ENCODE measurements at regions of chr3 and their contacts with region 1.

Region 1: DNA sequence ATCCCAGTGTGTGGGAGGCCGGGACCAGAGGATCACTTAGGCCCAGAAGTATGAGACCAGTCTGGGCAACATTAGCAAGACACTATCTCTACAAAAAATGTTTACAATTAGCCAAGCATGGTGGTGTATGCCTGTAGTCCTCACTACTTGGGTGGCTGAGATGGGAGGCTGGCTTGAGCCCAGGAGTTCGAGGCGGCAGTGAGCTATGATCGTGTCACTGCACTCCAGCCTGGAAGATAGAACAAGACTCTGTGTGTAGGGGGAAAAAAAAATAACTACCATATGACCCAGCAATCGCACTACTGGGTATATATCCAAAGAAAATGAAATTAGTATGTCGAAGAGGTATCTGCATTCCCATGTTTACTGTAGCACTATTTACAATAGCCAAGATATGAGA is 22.6 kb downstream of the RYK start:
- DNase-seq: no peak
- ATAC-seq: no peak
- H3K4me3 Mint-ChIP-seq: no peak overlapping the region
- H3K27ac Mint-ChIP-seq: no peak overlapping the region
- H3K4me1 Mint-ChIP-seq: peaks cover 55% of the 10 kb centered on the region
- H3K27me3 Mint-ChIP-seq: no peaks in the 10 kb centered on the region
- CTCF ChIP-seq: no peak

Region 2: GRCh38 chr3:134242649-134243617 is 14.9 kb after region 1 on chr3:
- CTCF ChIA-PET with region 1: interaction called, 3 read pairs
- POLR2A ChIA-PET with region 1: no interaction called
- intact Hi-C with region 1: loop called (anchors 1 kb)
- DNase-seq: no peak
- ATAC-seq: no peak
- H3K4me3 Mint-ChIP-seq: no peak overlapping the region
- H3K27ac Mint-ChIP-seq: no peak overlapping the region
- H3K4me1 Mint-ChIP-seq: peaks cover 71% of the 10 kb centered on the region
- H3K27me3 Mint-ChIP-seq: no peaks in the 10 kb centered on the region
- CTCF ChIP-seq: no peak

Region 3: GRCh38 chr3:134250717-134251220 is 22.7 kb after region 1 on chr3 and contains the start of gene RYK:
- CTCF ChIA-PET with region 1: interaction called, 3 read pairs
- POLR2A ChIA-PET with region 1: interaction called, 5 read pairs
- intact Hi-C with region 1: loop called (anchors 1 kb)
- DNase-seq: peak; percentile 86
- ATAC-seq: peak; percentile 74
- H3K4me3 Mint-ChIP-seq: peak within 1 kb of the TSS; percentile 94
- H3K27ac Mint-ChIP-seq: peak within 1 kb of the TSS; percentile 92
- H3K4me1 Mint-ChIP-seq: peaks cover 57% of the 10 kb centered on the region
- H3K27me3 Mint-ChIP-seq: no peaks in the 10 kb centered on the region
- CTCF ChIP-seq: no peak
- total RNA-seq, gene RYK: 34.0 and 38.8 TPM in 2 replicates

Region 4: DNA sequence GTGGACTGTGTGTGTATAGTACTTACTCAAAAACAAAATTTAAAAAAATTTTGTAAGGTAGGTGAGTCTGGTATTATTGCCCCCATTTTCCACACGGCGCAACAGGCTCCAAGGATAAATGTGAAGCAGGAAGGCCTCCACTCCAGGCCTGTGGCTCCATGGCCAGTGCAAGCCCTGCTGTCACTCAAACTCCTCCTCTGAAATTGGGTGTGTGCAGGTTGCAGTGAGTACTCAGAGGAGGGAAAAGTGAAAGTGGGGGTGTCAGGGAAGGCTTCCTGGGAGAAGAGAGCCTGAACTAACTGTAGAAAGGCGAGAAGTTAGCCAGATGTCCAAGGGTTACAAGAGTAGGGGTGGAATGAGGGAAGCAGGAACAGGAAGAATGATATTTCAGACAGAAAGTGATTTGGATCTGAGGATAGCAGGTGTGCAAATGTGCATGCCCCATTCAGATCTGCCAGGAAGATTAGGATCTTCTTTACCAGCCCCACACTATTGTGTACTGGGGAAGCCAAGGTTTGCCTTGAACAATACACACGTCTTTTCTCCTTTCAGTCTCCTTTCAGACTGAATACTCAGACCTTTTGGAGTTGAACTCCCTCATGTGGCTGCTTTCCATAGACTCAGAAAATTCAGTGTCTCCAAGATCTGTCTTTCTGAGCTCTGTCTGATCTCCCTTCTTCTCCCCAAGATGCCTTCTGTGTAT is 71.3 kb after region 1 on chr3:
- CTCF ChIA-PET with region 1: interaction called, 3 read pairs
- POLR2A ChIA-PET with region 1: no interaction called
- intact Hi-C with region 1: loop called (anchors 2 kb)
- DNase-seq: no peak
- ATAC-seq: no peak
- H3K4me3 Mint-ChIP-seq: no peak overlapping the region
- H3K27ac Mint-ChIP-seq: no peak overlapping the region
- H3K4me1 Mint-ChIP-seq: no peaks in the 10 kb centered on the region
- H3K27me3 Mint-ChIP-seq: peaks cover 7% of the 10 kb centered on the region
- CTCF ChIP-seq: no peak

Region 5: GRCh38 chr3:134505485-134505884 is 277.4 kb after region 1 on chr3:
- CTCF ChIA-PET with region 1: no interaction called
- POLR2A ChIA-PET with region 1: no interaction called
- intact Hi-C with region 1: no loop called
- DNase-seq: no peak
- ATAC-seq: no peak
- H3K4me3 Mint-ChIP-seq: no peak overlapping the region
- H3K27ac Mint-ChIP-seq: no peak overlapping the region
- H3K4me1 Mint-ChIP-seq: peaks cover 13% of the 10 kb centered on the region
- H3K27me3 Mint-ChIP-seq: no peaks in the 10 kb centered on the region
- CTCF ChIP-seq: no peak

Measured in activated B cell treated with CpG ODN at 0.5 μM for 24 hours (primary cell).